Activated T-helper 1 cell treated with anti-CD3 and anti-CD28 coated beads, Interleukin-12 subunit alpha, Interleukin-12 subunit beta, Interleukin-2, Interleukin-4 antibody, amounts not matched to agents 30 ng/mL and 10 ng/mL and 1 ng/mL, durations not matched to agents 14 hours and 24 hours and 36 hours (primary cell): ENCODE measurements at regions of chr19 and their contacts with region 1.

Region 1: DNA sequence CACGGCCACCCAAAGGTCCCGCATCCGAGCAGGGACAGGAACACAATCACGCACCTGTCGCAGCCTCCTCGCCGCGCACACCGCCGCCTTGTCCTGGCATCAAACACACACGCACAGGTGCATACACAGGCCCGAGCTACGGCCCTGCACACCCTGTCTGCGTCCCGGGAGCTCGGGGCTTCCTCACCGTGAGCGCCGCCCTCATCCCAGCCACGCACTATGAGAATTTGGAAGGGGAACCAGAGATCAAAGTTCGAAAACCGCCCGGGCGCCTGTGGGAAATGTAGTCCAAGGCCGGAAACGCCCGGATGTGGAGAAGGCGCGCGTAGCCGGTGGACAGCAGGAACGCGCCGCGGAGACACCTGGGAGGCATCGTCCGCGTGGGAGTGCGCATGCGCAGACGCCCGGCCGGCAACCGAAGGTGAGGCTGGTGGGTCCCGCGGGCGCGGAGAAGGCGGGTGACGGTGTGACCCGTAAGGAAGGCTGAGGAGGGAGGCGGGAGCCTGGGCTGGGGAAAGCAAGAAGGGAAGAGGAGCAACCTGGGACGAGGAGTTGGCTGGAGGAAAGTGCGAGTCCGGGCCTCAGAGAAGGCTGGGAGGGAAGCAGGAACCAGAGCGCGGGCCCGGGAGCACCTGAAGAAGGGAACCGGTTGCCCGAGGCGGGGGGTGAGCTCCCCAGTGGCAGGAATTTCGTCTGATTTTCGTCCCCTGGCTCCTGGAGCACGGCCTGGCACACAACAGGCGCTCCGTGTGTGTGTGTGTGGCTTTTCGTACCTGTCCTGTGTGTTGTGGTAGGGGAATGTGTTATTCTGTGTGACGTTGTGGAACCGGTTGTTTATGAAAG is at the start of gene ZNF567:
- DNase-seq: peak; percentile 97
- H3K4me3 Mint-ChIP-seq: peak within 1 kb of the TSS; percentile 95
- H3K27ac Mint-ChIP-seq: peak within 1 kb of the TSS; percentile 91
- H3K4me1 Mint-ChIP-seq: peaks cover 24% of the 10 kb centered on the region
- H3K27me3 Mint-ChIP-seq: peaks cover 2% of the 10 kb centered on the region
- total RNA-seq, gene ZNF567: 5.8 and 8.5 TPM in 2 replicates

Region 2: DNA sequence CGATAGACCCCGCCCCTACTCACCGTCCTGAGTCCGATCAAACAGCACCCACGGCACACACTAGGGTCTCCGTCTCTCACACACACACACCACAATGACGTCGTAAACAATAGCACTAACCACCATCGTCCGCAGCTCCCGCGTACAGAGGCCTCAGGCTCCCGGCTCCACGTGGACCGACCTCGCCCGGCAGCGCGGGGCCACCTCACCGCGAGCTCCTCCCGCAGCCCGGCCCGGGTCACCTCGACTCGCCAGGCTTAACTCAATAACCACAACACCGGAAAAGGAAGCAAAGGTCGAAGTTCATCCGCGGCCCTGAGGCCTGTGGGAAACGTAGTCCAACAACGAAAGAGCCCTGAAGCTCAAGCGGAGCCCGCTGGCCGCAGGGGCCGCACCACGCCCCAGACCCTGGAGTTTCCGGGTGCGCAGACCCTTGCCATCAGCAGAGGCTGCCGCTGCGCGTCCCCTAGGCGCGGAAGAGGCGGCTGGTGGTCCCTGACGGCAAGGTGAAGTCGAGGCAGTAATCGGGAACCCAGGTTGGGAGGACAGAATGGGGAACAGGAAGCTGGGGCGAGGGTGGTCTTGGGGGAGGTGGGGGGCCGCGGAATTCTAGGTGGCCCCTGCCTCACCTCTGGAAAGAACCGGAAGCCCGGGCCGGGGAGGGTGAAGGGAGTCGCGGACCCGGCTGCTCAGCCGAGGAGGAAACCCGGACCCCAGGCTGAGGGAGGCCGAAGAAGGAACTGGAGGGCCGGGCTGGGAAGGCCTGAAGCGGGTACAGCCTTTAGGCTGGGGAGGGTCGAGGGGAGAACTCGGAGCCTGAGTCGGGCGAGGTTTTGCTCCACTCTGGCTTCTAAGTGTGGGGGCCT is 114.2 kb before region 1 on chr19 and contains the start of gene ZNF529:
- intact Hi-C with region 1: loop called (anchors 1 kb)
- DNase-seq: peak; percentile 85
- H3K4me3 Mint-ChIP-seq: peak within 1 kb of the TSS; percentile 89
- H3K27ac Mint-ChIP-seq: peak within 1 kb of the TSS; percentile 98
- H3K4me1 Mint-ChIP-seq: peaks cover 31% of the 10 kb centered on the region
- H3K27me3 Mint-ChIP-seq: no peaks in the 10 kb centered on the region
- total RNA-seq, gene ZNF529: 20.3 and 20.7 TPM in 2 replicates

Region 3: GRCh38 chr19:36605101-36605876 is 82.1 kb before region 1 on chr19 and contains the start of gene ZNF382:
- intact Hi-C with region 1: loop called (anchors 1 kb)
- DNase-seq: peak; percentile 85
- H3K4me3 Mint-ChIP-seq: peak within 1 kb of the TSS; percentile 90
- H3K27ac Mint-ChIP-seq: peak within 1 kb of the TSS; percentile 95
- H3K4me1 Mint-ChIP-seq: peaks cover 26% of the 10 kb centered on the region
- H3K27me3 Mint-ChIP-seq: no peaks in the 10 kb centered on the region
- total RNA-seq, gene ZNF382: 10.2 and 10.8 TPM in 2 replicates

Region 4: GRCh38 chr19:36665832-36666231 is 21.6 kb before region 1 on chr19:
- intact Hi-C with region 1: loop called (anchors 1 kb)
- DNase-seq: no peak
- H3K4me3 Mint-ChIP-seq: peak overlapping the region; percentile 99
- H3K27ac Mint-ChIP-seq: peak overlapping the region; percentile 26
- H3K4me1 Mint-ChIP-seq: peaks cover 16% of the 10 kb centered on the region
- H3K27me3 Mint-ChIP-seq: no peaks in the 10 kb centered on the region

Region 5: GRCh38 chr19:36837906-36838783 is 150.7 kb after region 1 on chr19 and contains the start of gene ZNF790:
- intact Hi-C with region 1: loop called (anchors 1 kb)
- DNase-seq: peak; percentile 81
- H3K4me3 Mint-ChIP-seq: no peak within 1 kb of the TSS
- H3K27ac Mint-ChIP-seq: no peak within 1 kb of the TSS
- H3K4me1 Mint-ChIP-seq: no peaks in the 10 kb centered on the region
- H3K27me3 Mint-ChIP-seq: no peaks in the 10 kb centered on the region
- total RNA-seq, gene ZNF790: 4.4 and 4.5 TPM in 2 replicates

Region 6: DNA sequence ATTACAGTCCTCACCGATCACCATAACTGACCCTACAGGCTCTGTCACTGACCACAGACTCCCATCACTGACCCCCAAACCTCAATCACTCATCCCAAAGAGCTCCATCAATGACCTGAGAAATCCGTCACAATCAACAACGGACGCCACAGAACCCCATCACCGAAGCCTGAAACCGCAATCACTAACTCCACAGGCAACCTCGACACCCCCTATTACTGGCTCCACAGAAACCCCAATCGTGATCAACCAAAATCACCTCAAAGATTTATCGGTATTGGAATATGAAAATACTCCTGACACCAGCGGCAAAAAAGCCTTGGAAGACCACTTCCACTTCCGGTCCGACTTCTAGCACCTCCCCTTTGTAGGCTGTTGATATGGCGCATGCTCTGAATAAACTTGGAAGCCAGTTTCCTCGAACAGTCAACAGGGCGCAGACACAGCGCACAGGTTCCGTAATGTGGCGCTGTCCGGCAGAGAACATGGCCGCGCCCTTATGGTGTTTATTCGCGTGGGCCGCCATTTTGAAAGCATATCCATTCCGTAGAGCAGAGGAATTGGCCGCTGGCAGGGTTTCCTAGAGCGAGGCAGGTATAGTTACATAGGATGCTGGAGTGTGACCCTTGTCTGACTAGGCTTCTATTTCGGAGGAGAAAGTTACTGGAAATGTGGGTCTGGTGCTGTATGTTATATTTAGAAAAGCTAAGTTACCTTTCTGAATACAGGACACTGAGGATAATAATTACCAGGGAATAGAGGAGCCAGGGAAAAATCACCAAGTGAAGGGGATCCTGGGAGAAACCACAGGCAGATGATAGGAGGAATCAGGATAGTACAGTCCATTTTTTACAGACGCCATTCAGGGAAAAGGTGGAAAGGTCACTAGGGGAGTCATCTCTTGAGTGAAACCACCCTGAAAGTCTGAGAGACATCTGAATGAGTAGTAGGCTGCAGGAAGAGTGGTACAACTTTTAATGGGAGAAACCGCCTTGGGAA is 485.2 kb after region 1 on chr19 and contains the start of gene ZNF585A:
- intact Hi-C with region 1: loop called (anchors 5 kb)
- DNase-seq: peak; percentile 74
- H3K4me3 Mint-ChIP-seq: no peak within 1 kb of the TSS
- H3K27ac Mint-ChIP-seq: no peak within 1 kb of the TSS
- H3K4me1 Mint-ChIP-seq: no peaks in the 10 kb centered on the region
- H3K27me3 Mint-ChIP-seq: no peaks in the 10 kb centered on the region
- total RNA-seq, gene ZNF585A: 1.2 and 2.6 TPM in 2 replicates